Left ventricle myocardium superior (tissue), 1 donor: ENCODE measurements at regions of chr7 and their contacts with region 1.

Region 1: DNA sequence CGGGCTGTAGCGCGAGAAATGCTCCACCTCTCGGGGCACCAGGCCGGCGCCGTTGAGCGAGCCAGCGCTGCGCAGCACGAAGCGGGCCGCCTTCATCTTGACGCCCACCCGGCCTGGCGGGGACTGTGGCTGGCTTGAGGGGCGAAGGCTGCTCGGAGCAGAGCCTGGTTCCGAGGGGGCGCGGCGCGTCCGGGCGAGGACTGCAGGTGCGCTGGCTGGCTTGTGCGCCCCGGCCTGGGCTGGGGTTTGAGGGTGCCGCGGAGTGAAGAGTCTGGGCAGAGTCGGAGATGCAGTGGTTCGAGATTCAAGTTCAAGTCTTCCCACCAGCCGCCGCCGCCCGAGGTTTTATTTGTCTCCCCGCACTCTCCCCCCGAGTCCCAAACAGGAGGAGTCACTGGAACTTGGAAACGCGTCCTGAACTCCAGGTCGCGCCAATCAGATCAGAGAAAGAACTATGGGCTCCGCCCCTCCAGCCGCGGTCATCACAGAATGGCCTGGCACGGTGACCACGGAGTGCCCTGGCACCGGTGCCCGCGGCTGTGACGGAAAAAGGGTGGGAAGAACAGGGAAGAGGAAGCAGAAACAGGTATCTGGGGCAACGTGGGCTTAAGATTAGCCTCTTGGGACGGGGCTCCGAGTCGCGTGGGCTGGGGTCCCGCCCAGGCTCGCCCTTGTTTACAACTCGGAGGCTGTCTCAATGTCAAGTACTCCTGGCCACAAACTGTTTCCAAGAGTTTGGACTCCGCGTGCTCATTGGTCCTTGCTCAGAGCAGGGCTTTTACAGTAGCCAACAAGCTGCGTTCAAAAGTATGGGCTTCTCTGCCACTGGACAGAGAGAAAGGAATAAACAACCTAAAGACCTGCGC is at the start of gene PDK4:
- DNase-seq: peak; percentile 97
- ATAC-seq: peak; percentile 89
- total RNA-seq, gene PDK4: 289 TPM

Region 2: GRCh38 chr7:95155965-95156364 is 440.5 kb before region 1 on chr7:
- intact Hi-C with region 1: no loop called
- DNase-seq: no peak
- ATAC-seq: no peak

Region 3: DNA sequence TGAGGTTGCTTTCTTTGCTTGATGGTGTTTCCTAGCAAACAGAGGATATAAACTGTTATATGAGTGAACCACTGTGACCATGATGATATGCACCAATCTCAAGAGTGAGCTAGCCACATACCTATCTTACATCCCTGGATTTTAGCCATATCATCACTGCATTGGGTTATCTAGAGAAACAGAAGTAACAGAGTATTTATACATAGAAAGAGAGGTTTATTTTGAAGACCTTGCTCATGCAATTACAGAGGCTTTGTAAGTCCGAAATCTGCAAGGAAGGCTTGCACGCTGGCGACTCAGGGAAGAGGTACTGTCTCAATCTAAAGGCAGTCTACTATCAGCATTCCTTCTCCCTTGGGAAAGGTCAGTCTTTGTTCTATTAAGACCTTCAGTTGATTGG is 149.8 kb before region 1 on chr7:
- intact Hi-C with region 1: no loop called
- DNase-seq: no peak
- ATAC-seq: no peak

Region 4: DNA sequence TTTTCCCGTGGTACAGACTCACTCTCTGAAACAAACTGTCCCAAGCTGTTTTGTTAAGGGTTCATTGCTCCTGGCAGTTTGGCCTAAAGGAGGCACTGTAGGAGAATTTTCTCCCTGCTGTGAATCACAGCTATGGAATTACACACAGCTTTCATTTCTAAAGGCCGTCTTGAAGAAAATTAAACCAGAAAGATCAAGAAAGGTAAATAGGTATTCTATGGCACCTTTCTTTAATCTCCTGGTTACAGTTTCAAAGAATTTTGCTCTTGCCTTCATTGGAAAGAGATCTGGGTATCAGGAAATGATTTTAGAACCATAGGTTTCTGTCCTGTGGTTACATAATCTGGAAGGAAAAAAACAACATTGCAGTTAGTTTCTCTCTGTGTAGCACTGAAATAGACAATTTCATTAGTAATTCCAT is 51.3 kb before region 1 on chr7:
- intact Hi-C with region 1: loop called (anchors 5 kb)
- DNase-seq: no peak
- ATAC-seq: peak; percentile 82